Right ventricle myocardium inferior (tissue), 1 donor: ENCODE measurements at regions of chr3 and their contacts with region 1.

Region 1: DNA sequence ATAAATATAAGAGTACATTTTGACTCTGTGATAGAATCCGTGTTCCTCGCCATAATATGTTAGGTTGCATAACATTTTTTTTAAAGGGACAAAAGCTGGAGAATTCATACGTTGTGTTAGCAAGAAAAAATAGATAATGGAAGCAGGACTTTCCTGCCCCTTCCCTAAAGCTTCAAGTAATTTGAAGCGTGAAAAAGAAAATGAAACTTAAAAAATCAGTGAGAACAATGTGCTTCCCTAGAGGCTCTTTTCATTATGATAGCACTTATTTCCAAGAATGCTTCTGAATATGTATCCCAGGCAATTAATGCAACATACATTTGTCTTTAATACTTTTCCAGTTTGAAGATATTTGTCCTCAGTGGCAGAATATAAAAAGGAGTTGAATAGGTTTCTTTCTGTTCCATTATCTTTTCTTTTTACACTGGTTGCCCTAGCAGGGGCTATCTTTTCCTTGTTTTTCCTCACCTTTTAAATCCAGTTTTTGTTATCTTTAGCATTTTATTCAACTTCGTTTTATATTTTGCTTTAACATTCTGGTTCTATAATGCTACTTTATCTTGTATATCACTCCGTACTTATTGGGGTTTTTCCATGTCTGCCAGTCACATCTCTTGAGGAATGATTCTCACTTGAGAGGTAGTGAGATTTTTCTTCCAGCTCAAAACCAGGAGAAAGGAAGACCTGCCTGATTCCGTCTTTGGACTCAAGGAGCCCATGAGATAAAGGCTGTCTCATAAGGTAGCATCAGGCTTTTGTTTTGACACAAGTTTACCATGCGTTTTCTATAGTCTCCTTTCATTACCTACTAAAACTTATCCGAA is 113.8 kb downstream of the MBNL1 start:
- DNase-seq: no peak
- ATAC-seq: peak; percentile 22

Region 2: GRCh38 chr3:152011812-152012735 is 370.4 kb before region 1 on chr3:
- intact Hi-C with region 1: no loop called
- DNase-seq: no peak
- ATAC-seq: no peak

Region 3: DNA sequence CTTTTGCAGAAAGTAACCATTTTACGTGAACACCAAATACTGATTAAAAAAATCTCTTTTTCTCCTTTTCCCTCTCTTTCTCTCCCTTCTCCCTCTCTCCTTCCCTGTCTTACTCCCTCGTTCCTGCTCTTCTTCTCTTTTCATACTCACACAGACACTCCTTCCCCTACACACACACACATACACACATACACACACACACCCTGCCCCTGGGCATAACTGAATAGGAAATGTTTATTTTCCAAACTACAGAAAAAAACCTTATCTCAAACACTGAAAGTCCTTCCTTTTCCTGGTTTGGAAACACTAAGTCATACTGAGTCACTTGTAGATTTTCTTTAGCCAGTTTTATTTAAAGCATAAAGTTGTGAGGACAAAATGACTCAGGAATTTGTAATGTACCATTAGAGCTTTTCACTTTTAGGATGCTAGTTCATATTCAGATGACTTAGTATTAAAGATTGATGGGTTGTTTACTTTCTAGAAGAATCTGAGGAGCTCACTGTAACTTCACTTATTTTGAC is 51.4 kb before region 1 on chr3:
- intact Hi-C with region 1: loop called (anchors 5 kb)
- DNase-seq: no peak
- ATAC-seq: peak; percentile 60

Region 4: DNA sequence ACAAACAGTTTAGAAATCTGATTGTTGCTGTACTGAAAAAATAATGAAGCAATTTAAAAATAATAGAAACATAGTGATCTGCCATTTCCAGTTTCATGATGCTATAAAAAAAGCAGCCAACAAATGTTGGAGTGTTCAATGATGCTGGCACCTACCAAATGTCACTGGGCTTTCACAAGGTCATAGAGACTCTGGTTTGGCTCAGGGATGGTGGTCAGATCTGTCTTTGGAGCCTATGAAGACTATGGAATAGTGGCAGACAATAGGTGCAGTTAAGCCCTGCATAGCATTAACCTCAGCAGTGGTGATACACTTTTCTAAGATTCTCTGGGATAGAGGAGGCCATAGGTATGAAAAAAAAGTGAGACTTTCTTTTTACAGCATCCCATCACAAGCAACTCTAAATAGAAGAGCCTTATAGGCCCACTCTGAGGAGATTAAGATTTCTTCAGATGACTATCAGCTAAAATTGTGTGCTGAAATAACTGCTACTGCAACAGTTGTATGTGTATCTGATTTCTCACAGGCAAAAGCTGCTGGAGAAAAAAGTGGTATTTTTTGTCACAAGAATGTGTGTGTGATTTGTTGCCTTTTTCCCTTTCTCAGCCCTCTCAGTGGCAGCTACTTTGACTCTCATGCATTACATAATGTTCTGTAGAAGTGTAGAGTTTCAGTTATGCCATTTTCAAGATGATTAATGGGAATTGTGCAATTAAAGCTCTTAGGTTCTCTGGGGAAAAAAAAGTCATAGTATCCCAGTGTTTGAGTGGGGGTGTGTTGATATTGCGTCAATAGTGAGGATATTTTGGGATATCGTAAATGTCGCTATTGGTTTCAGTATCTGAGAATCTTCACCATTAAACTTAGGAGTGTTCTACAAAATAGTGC is 23.6 kb after region 1 on chr3:
- intact Hi-C with region 1: loop called (anchors 2 kb)
- DNase-seq: no peak
- ATAC-seq: peak; percentile 75